Endothelial cell of umbilical vein (primary cell): ENCODE measurements at regions of chr4 and their contacts with region 1.

Region 1: DNA sequence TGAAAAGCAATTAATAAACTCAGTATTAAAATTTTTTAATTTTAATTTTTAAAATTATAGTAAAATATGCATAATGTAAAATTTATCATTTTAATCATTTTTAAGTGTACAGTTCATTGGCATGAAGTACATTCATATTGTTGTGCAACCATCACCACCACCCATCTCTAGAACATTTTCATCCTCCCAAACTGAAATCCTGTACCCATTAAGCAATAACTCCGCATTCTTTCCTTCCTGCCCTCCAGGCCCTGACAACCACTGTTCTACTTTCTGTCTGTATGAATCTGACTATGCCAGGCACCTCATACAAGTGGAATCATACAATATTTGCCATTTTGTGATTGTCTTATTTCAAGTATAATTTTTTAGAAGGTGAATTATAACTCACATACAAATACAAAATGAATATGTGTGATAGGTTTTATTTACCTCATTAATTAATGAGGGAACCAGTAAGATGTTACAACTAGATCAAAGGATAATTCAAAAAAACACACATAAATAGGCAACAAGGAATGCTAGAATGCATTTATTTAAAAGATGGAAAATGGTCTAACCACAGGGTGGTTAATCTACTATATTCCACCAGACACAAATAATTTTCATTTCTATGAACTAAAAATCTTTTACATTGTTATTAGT is 13.1 kb upstream of the AFF1 start:
- DNase-seq: no peak
- H3K4me3 ChIP-seq: no peak overlapping the region
- H3K27ac ChIP-seq: no peak overlapping the region
- H3K4me1 ChIP-seq: peaks cover 19% of the 10 kb centered on the region
- H3K27me3 ChIP-seq: no peaks in the 10 kb centered on the region
- CTCF ChIP-seq: no peak
- POLR2A ChIP-seq: no peak

Region 2: DNA sequence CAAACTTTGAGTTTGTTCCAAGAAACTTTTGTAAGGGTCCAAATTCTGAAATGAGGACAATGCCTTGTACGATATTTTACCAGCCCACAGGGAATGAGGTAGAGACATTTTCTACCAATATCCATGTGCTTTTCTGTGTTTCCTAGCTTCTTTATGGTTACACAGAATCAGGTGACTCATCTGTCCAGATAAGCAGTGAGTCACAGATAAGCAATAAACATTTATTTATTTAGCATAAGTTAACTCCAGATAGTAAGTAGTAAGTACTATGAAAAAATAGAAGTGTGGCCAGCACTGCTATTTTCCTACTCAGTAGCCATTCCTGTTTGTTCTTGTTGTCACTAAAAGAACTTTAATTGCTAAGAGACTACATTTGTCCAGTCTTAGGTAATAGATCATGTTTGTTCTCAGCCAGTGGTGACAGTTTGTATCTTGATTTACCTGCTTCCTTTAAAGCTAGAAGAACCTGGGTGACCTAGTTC is 20.5 kb after region 1 on chr4:
- CTCF ChIA-PET with region 1: interaction called, 13 read pairs
- POLR2A ChIA-PET with region 1: no interaction called
- dilution Hi-C with region 1: no loop called
- intact Hi-C with region 1: no loop called
- DNase-seq: peak; percentile 71
- H3K4me3 ChIP-seq: no peak overlapping the region
- H3K27ac ChIP-seq: peak overlapping the region; percentile 60
- H3K4me1 ChIP-seq: peaks cover 47% of the 10 kb centered on the region
- H3K27me3 ChIP-seq: no peaks in the 10 kb centered on the region
- CTCF ChIP-seq: no peak
- POLR2A ChIP-seq: no peak

Region 3: DNA sequence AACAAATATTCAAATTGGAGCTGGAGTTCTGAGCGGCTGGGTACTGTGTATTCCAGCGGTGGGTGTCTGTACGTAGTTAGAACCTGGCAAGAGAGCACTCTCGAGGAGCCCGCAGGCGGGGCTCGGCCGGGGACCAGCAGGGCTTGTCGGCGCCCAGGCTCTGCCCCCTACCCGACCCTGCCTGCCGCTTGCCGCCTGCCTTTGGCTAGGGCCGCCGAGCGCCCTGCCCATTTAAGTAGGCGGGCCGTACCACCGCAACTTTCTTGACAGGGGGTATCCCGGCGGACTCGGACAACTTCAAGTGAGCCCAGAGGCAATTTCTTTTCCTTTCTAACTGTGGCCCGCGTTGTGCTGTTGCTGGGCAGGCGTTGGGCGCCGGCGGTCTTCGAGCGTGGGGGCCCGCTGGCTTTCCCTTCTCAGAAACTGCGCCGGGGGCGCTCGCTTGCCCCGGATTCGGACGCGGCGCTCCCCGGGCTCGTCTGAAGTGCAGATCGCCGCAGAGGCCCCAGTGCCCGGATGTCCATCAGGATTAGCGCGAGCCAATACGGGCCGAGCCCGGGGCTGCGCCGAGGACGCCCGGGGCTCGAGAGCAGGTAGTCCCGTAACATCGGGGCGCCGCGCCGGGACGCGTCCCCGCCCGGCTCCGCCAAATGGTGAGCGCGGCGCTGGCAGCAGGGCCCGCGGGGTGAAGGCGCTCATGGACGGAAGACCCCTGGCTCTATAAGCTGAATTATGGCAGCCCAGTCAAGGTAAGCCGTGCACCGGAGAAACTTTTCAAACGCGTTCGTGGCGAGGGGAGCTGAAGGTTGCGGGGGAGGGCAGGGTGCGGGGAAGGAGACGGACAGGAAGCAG is 85.2 kb after region 1 on chr4:
- CTCF ChIA-PET with region 1: interaction called, 62 read pairs
- POLR2A ChIA-PET with region 1: interaction called, 11 read pairs
- dilution Hi-C with region 1: no loop called
- intact Hi-C with region 1: loop called (anchors 1 kb)
- DNase-seq: peak; percentile 94
- H3K4me3 ChIP-seq: peak overlapping the region; percentile 84 to 93 (median 93)
- H3K27ac ChIP-seq: peak overlapping the region; percentile 92
- H3K4me1 ChIP-seq: peaks cover 39% of the 10 kb centered on the region
- H3K27me3 ChIP-seq: no peaks in the 10 kb centered on the region
- CTCF ChIP-seq: peak; percentile 12 to 13
- POLR2A ChIP-seq: peak; percentile 99

Region 4: DNA sequence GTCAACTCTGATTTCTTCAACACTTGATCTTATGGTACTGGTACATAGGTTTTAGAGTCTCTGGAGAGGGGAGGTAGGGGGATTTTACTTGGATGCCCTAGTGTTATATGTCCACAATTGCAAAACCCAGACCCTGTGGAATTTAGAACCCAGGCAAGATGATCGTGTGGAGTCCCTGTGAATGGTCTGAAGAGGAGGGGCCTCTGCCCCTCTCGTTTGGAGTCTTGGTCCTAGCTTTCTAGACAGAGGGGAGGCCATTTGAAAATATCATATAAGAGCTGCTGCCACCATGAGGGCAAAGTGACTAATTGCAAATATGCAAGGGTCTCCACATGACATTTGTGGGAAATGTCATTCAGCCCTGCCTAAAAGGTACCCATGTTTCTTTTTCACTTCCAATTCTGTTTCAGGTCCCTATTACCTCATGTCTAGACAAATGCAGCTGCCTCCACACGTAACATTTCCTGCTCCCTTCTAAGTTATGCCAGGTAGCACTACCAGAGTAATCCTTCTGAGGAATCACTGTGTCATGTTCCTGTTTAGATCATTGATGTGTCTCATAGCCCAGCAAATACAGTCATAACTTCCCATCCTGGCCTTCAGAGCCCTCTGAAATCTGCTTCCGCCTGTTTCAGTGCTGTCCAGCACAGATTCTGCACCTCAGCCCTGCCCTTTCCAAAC is 171.9 kb after region 1 on chr4:
- CTCF ChIA-PET with region 1: interaction called, 157 read pairs
- POLR2A ChIA-PET with region 1: no interaction called
- dilution Hi-C with region 1: no loop called
- intact Hi-C with region 1: loop called (anchors 1 kb)
- DNase-seq: peak; percentile 70
- H3K4me3 ChIP-seq: no peak overlapping the region
- H3K27ac ChIP-seq: peak overlapping the region; percentile 68
- H3K4me1 ChIP-seq: peaks cover 33% of the 10 kb centered on the region
- H3K27me3 ChIP-seq: no peaks in the 10 kb centered on the region
- CTCF ChIP-seq: peak; percentile 35 to 58
- POLR2A ChIP-seq: no peak

Region 5: GRCh38 chr4:87150498-87151261 is 228.9 kb after region 1 on chr4:
- CTCF ChIA-PET with region 1: interaction called, 45 read pairs
- POLR2A ChIA-PET with region 1: interaction called, 6 read pairs
- dilution Hi-C with region 1: no loop called
- intact Hi-C with region 1: loop called (anchors 1 kb)
- DNase-seq: peak; percentile 87
- H3K4me3 ChIP-seq: no peak overlapping the region
- H3K27ac ChIP-seq: no peak overlapping the region
- H3K4me1 ChIP-seq: no peaks in the 10 kb centered on the region
- H3K27me3 ChIP-seq: no peaks in the 10 kb centered on the region
- CTCF ChIP-seq: peak; percentile 62 to 68
- POLR2A ChIP-seq: no peak